GM13976 (cell line): ENCODE measurements at regions of chr6 and their contacts with region 1.

Region 1: GRCh38 chr6:131519670-131520436 is 53.2 kb upstream of the ARG1 start:
- DNase-seq: no peak
- CTCF ChIP-seq: peak; percentile 65

Region 2: DNA sequence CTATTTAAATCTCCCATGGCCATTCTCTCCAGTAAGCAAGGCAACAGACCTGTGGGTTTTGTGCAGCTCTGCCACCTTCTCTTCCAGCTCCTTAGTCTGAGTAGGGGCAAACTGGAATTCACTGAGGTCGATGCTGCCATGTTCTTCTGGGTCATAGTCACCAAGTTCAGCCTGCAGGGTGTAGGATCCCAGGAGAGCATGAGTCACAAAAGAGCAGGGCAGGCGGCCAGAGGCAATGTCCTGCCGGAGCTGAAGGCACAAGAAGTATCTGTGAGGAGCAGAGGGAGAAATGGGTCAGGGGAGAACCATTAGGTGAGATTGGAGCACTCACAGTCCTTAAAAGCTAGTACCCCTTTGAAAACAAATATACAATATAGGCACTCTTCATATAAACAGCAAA is 618.9 kb before region 1 on chr6:
- in situ Hi-C with region 1: no loop called
- DNase-seq: no peak
- CTCF ChIP-seq: no peak

Region 3: DNA sequence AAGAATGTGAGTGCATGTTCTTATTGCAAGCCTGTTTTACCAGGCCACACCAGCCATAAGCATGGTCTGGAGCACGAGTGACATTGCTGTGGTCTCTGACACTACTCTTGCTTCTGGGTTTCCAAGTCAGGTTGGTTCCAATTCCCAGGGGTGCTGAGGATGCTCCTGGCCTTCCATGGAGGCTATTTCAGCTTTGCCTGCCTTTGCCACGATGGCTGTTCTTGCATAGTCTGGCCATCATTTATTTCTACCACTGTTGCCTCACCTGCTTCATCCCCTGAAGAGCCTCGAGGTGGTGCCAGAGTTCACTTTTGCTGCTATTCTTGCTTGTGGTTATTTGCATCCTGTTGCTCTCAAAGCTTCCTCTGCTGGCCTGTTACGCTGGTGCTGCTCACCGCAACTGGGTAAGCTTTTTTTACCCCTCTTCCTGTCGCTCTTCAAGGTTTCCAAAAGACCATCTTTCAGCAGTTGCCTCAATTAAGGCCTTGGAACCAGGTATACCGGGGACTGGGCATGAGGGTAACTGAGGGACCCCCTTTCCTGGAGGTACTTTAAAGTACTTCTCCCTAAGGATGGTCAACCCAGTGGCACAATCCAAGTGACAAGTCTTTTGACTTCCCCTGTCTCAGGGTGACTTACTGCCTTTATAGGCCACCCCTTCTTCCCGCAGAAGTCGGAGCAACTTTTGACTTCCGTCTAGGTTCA is 320.1 kb before region 1 on chr6:
- in situ Hi-C with region 1: loop called (anchors 10 kb)
- DNase-seq: peak; percentile 60
- CTCF ChIP-seq: peak; percentile 76